WTC11 (cell line): ENCODE measurements at regions of chr2 and their contacts with region 1.

Region 1: DNA sequence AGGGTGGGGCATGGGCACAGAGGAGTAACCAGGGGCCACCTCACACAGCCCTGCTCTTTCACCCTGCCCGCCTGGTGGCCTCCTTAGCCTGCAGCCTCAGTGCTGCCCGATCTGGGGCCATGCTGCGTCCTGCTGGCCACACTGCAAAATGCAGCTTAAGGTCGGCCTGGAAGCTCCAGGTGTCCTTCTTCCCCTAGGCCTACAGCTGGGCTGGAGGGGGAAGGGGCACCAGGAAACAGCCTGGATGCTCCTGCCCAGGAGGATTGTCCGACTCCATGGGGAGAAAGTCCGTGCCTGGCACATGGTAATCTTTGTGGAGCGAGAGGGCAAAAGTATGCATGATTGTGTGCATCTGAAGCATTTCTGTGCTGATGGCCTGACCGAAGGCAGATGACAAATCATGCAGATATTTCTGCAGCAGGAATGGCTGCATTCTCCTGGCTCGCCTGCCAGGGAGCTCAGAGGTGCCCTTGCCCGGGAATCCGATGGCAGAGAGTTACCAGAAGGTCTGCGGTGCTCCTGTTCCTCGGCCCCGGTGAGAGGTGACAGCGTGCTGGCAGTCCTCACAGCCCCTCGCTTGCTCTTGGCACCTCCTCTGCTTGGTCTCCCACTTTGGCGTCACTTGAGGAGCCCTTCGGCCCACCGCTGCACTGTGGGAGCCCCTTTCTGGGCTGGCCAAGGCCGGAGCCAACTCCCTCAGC is 12.8 kb upstream of the ALPP start:
- DNase-seq: peak; percentile 71
- ATAC-seq: peak; percentile 75
- H3K4me3 Mint-ChIP-seq: no peak overlapping the region
- H3K27ac Mint-ChIP-seq: no peak overlapping the region
- H3K4me1 Mint-ChIP-seq: peaks cover 16% of the 10 kb centered on the region
- H3K27me3 Mint-ChIP-seq: no peaks in the 10 kb centered on the region; the same call in 1 of the 2 replicates
- CTCF ChIP-seq: peak; percentile 40

Region 2: DNA sequence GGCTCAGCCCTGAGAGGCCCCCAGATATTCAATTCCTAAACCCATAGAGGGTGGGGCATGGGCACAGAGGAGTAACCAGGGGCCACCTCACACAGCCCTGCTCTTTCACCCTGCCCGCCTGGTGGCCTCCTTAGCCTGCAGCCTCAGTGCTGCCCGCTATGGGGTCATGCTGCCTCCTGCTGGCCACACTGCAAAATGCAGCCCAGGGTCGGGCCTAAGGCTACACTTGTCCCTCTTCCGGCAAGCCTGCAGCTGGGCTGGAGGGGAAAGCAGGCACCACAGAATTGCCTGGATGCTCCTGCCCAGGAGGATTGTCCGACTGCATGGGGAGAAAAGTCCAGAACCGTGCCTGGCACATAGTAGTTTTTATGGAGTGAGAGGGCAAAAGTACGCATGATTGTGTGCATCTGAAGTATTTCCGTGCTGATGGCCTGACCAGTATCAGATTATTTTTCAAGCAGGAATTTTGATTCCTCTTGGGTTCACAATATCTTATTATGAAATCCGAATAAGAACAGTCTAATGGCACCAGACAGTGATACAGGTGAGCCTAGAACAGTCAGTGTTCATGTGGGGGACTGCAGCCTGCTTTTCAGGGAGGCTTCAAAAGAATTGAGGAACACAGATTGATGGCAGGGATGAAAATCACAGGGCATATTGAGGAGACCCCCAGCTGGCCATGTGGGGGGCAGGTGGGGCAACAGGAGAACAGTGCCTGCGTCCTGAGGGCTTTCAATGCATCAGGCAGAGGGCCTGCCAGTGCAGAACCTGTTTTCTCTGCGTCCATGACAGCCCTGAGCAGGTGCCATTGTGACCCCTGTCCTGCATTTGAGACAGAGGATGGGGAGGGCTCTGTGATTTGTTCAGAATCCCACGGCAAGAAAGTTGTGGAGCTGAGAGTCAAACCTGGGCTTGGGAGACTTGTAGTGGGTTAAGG is 38.4 kb before region 1 on chr2:
- CTCF ChIA-PET with region 1: interaction called, 41 read pairs
- POLR2A ChIA-PET with region 1: no interaction called
- DNase-seq: peak; percentile 96
- ATAC-seq: peak; percentile 71
- H3K4me3 Mint-ChIP-seq: no peak overlapping the region
- H3K27ac Mint-ChIP-seq: peak overlapping the region; percentile 68; the same call in 1 of the 2 replicates
- H3K4me1 Mint-ChIP-seq: peaks cover 3% of the 10 kb centered on the region; the same call in 1 of the 2 replicates
- H3K27me3 Mint-ChIP-seq: no peaks in the 10 kb centered on the region
- CTCF ChIP-seq: peak; percentile 91

Region 3: GRCh38 chr2:232339121-232340081 is 26.4 kb before region 1 on chr2:
- CTCF ChIA-PET with region 1: interaction called, 78 read pairs
- POLR2A ChIA-PET with region 1: no interaction called
- DNase-seq: peak; percentile 76
- ATAC-seq: peak; percentile 68
- H3K4me3 Mint-ChIP-seq: no peak overlapping the region
- H3K27ac Mint-ChIP-seq: peak overlapping the region; percentile 80
- H3K4me1 Mint-ChIP-seq: peaks cover 3% of the 10 kb centered on the region
- H3K27me3 Mint-ChIP-seq: no peaks in the 10 kb centered on the region; the same call in 1 of the 2 replicates
- CTCF ChIP-seq: peak; percentile 51; the same call in 1 of the 2 replicates

Region 4: GRCh38 chr2:232377801-232378734 is 12.3 kb after region 1 on chr2:
- CTCF ChIA-PET with region 1: interaction called, 48 read pairs
- POLR2A ChIA-PET with region 1: no interaction called
- DNase-seq: peak; percentile 12
- ATAC-seq: no peak
- H3K4me3 Mint-ChIP-seq: no peak overlapping the region
- H3K27ac Mint-ChIP-seq: no peak overlapping the region
- H3K4me1 Mint-ChIP-seq: peaks cover 19% of the 10 kb centered on the region
- H3K27me3 Mint-ChIP-seq: peaks cover 12% of the 10 kb centered on the region
- CTCF ChIP-seq: no peak

Region 5: GRCh38 chr2:232418466-232419244 is 52.9 kb after region 1 on chr2:
- CTCF ChIA-PET with region 1: interaction called, 10 read pairs
- POLR2A ChIA-PET with region 1: no interaction called
- DNase-seq: peak; percentile 57
- ATAC-seq: peak; percentile 6
- H3K4me3 Mint-ChIP-seq: peak overlapping the region; percentile 77
- H3K27ac Mint-ChIP-seq: no peak overlapping the region
- H3K4me1 Mint-ChIP-seq: peaks cover 26% of the 10 kb centered on the region
- H3K27me3 Mint-ChIP-seq: peaks cover 68% of the 10 kb centered on the region
- CTCF ChIP-seq: no peak